Heart left ventricle (tissue), 16 donors: ENCODE measurements at regions of chr2 and their contacts with region 1.

Region 1: GRCh38 chr2:128469203-128469602 is 150.5 kb upstream of the HS6ST1 start:
- DNase-seq: no peak
- ATAC-seq: no peak
- H3K4me3 ChIP-seq: no peak overlapping the region
- H3K27ac ChIP-seq: no peak overlapping the region
- H3K4me1 ChIP-seq: peaks cover 0 to 38% (median 15%) of the 10 kb centered on the region in 12 donors
- H3K27me3 ChIP-seq: peaks cover 0 to 7% (median 0%) of the 10 kb centered on the region in 9 donors
- CTCF ChIP-seq: peak in 5 of 12 donors; percentile 11 to 21 (median 13)
- POLR2A ChIP-seq: no peak

Region 2: GRCh38 chr2:128442053-128442751 is 27.0 kb before region 1 on chr2:
- intact Hi-C with region 1: loop called in 1 of 10 experiments (anchors 2 kb)
- DNase-seq: no peak
- ATAC-seq: no peak
- H3K4me3 ChIP-seq: no peak overlapping the region
- H3K27ac ChIP-seq: peak overlapping the region in 7 of 12 donors; percentile 17 to 86 (median 47)
- H3K4me1 ChIP-seq: peaks cover 0 to 46% (median 16%) of the 10 kb centered on the region in 12 donors
- H3K27me3 ChIP-seq: no peaks in the 10 kb centered on the region
- CTCF ChIP-seq: no peak
- POLR2A ChIP-seq: no peak

Region 3: DNA sequence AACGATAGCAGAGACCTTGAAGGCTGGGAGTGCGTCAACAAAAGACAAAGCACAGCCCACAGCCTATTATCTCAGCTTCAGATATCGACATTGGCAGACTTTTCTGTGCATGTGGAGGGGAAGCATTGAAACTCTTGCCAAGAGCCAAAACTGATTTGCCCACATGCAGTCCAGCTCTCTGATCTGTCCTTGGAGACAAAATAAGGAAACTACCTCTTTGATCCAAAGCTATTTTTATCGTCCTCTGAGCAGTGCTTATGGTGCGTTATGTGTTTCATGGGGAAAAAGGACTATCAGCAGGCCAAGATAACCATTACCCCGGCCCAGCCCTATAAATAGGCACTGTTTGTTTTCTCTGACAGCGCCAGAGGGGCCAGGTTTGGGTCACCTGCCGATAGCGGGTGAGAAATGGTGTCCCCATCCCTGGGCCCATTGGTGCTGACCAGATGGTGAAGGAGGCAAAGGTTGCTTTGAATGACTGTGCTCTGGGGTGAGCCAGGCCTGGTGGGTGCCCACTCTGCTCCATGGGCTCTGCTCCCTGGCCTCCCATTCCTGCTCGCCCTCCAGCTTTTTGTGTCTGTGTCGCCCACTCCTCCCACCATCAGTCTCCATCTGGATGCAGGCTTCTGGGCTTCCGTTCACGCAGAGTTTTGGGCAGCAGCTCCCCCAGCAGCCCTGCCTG is 25.6 kb after region 1 on chr2:
- intact Hi-C with region 1: loop called in 2 of 10 experiments (anchors 1 kb)
- DNase-seq: peak in 4 of 5 donors; percentile 43 to 66 (median 52)
- ATAC-seq: peak; percentile 86 to 89 (median 88)
- H3K4me3 ChIP-seq: no peak overlapping the region
- H3K27ac ChIP-seq: peak overlapping the region; percentile 27 to 84 (median 67)
- H3K4me1 ChIP-seq: peaks cover 0 to 31% (median 8%) of the 10 kb centered on the region in 12 donors
- H3K27me3 ChIP-seq: peaks cover 0 to 10% (median 0%) of the 10 kb centered on the region in 9 donors
- CTCF ChIP-seq: no peak
- POLR2A ChIP-seq: no peak

Region 4: DNA sequence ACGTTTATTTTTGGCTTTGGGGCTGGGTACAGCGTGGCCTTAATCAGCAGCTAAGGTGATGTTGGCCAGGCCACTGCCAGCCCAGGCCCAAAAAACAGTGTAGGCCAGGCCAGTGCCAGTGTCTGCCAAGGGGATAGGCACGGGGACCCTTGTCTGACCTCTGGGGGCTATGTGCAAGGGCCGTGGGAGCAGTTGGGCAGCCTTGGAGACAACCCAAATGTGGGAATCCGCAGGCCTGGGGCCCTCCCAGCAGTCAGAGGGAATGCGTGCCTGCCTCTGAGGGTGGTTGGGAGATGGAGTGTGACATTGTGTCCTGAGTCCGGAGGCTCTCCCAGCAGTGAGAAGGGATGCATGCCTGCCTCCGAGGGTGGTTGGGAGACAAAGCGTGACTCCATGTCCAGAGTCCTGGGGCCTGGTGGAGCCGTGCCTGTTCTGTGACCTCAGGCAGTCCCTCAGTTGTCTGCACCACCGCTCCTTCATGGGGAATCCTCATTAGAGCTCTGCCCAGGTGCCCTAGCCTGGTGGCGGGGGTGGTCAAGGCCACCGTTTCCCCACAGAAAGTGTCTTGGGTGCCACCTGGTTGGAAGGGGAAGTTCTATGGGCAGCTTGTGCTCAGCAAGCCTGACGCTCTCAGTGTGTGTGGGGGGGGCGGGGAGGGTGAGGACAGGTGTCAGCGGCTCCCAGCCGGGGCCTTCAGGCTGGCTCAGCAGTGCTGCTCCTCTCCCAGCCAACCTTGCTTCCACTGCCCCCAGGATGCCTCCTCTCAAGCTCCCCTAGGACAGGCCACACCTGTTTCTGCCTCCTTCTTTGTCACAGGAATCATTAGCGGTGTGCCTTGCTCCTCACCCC is 34.8 kb after region 1 on chr2:
- intact Hi-C with region 1: loop called in 1 of 10 experiments (anchors 5 kb)
- DNase-seq: peak in 4 of 5 donors; percentile 17 to 61 (median 46)
- ATAC-seq: peak; percentile 72 to 90 (median 81)
- H3K4me3 ChIP-seq: no peak overlapping the region
- H3K27ac ChIP-seq: peak overlapping the region in 7 of 12 donors; percentile 3 to 61 (median 42)
- H3K4me1 ChIP-seq: peaks cover 0 to 40% (median 8%) of the 10 kb centered on the region in 12 donors
- H3K27me3 ChIP-seq: no peaks in the 10 kb centered on the region
- CTCF ChIP-seq: no peak
- POLR2A ChIP-seq: no peak